Common myeloid progenitor, CD34-positive (primary cell): ENCODE measurements at regions of chr20 and their contacts with region 1.

Region 1: GRCh38 chr20:54680872-54681619 is 205.7 kb downstream of the DOK5 start:
- DNase-seq: peak; percentile 28 to 55 (median 52)
- H3K4me3 ChIP-seq: no peak overlapping the region
- H3K27ac ChIP-seq: no peak overlapping the region
- H3K4me1 ChIP-seq: no peaks in the 10 kb centered on the region
- H3K27me3 ChIP-seq: peaks cover 0 to 31% (median 4%) of the 10 kb centered on the region in 5 experiments

Region 2: GRCh38 chr20:54668271-54669039 is 12.6 kb before region 1 on chr20:
- CTCF ChIA-PET with region 1: interaction called, 14 read pairs
- POLR2A ChIA-PET with region 1: no interaction called
- DNase-seq: peak; percentile 26 to 51 (median 49)
- H3K4me3 ChIP-seq: peak overlapping the region in 2 of 7 experiments; percentile 11 to 57
- H3K27ac ChIP-seq: no peak overlapping the region
- H3K4me1 ChIP-seq: peaks cover 0 to 3% (median 0%) of the 10 kb centered on the region in 4 experiments
- H3K27me3 ChIP-seq: peaks cover 0 to 9% (median 4%) of the 10 kb centered on the region in 5 experiments